Caco-2 (cell line): ENCODE measurements at regions of chr6 and their contacts with region 1.

Region 1: GRCh38 chr6:7992002-7992815 is 72.0 kb downstream of the BLOC1S5 start:
- DNase-seq: peak in 1 of 2 experiments; percentile 36
- H3K4me3 ChIP-seq: no peak overlapping the region
- H3K4me3 Mint-ChIP-seq: no peak overlapping the region
- H3K27ac Mint-ChIP-seq: no peak overlapping the region
- H3K4me1 ChIP-seq: peaks cover 3% of the 10 kb centered on the region
- H3K4me1 Mint-ChIP-seq: peaks cover 7% of the 10 kb centered on the region
- H3K27me3 ChIP-seq: no peaks in the 10 kb centered on the region
- H3K27me3 Mint-ChIP-seq: no peaks in the 10 kb centered on the region
- CTCF ChIP-seq: peak in 1 of 2 experiments; percentile 47

Region 2: GRCh38 chr6:7910654-7911344 is 81.4 kb before region 1 on chr6 and contains the start of gene TXNDC5:
- CTCF ChIA-PET with region 1: interaction called, 3 read pairs
- POLR2A ChIA-PET with region 1: no interaction called
- intact Hi-C with region 1: loop called (anchors 5 kb)
- DNase-seq: peak; percentile 72 to 85
- H3K4me3 ChIP-seq: peak within 1 kb of the TSS; percentile 77
- H3K4me3 Mint-ChIP-seq: peak within 1 kb of the TSS; percentile 80
- H3K27ac Mint-ChIP-seq: peak within 1 kb of the TSS; percentile 74
- H3K4me1 ChIP-seq: peaks cover 5% of the 10 kb centered on the region; the same call in 1 of the 2 replicates
- H3K4me1 Mint-ChIP-seq: no peaks in the 10 kb centered on the region
- H3K27me3 ChIP-seq: no peaks in the 10 kb centered on the region
- H3K27me3 Mint-ChIP-seq: no peaks in the 10 kb centered on the region
- CTCF ChIP-seq: no peak
- total RNA-seq, gene TXNDC5: 117 and 119 TPM in 2 replicates

Region 3: DNA sequence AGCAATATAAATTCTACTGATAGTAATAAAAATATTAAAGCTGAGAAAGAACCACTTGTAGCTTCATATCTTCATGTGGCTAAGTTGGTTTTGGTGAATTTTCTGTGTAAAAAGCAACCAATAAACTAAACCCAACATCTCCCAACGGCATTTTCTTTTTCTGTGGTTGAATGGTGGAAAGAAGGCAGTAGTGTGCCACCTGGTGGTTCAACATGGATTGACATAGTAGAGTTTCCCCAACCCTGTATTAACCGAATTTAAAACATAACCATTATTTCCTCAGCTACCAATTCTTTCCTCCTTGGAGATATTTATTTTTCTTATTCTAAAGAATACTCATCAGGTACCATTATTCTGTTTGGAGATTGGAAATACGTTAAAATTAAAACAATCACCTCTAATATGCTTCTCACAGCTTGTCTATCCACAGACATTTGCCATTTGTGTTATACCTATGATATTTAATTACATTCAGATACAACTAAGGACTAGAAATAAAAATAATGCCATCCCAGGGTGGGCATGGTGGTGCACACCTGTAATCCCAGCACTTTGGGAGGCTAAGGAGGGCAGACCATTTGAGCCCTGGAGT is 227.2 kb after region 1 on chr6:
- CTCF ChIA-PET with region 1: no interaction called
- POLR2A ChIA-PET with region 1: no interaction called
- intact Hi-C with region 1: no loop called
- DNase-seq: peak in 1 of 2 experiments; percentile 52
- H3K4me3 ChIP-seq: no peak overlapping the region
- H3K4me3 Mint-ChIP-seq: no peak overlapping the region
- H3K27ac Mint-ChIP-seq: no peak overlapping the region
- H3K4me1 ChIP-seq: peaks cover 18% of the 10 kb centered on the region
- H3K4me1 Mint-ChIP-seq: peaks cover 14% of the 10 kb centered on the region
- H3K27me3 ChIP-seq: no peaks in the 10 kb centered on the region
- H3K27me3 Mint-ChIP-seq: no peaks in the 10 kb centered on the region
- CTCF ChIP-seq: peak; percentile 50 to 71